Dorsolateral prefrontal cortex (tissue), 120 donors: ENCODE measurements at regions of chr17 and their contacts with region 1.

Region 1: GRCh38 chr17:68777243-68777855 is 176.2 kb upstream of the FAM20A start:
- DNase-seq: peak in 4 of 10 donors; percentile 33 to 67 (median 56)
- H3K4me3 ChIP-seq: peak overlapping the region in 31 of 59 donors; percentile 5 to 53 (median 22)
- H3K27ac ChIP-seq: peak overlapping the region; percentile 52 to 98 (median 90)
- H3K27me3 ChIP-seq: no peaks in the 10 kb centered on the region
- CTCF ChIP-seq: peak; percentile 62 to 97 (median 88)

Region 2: DNA sequence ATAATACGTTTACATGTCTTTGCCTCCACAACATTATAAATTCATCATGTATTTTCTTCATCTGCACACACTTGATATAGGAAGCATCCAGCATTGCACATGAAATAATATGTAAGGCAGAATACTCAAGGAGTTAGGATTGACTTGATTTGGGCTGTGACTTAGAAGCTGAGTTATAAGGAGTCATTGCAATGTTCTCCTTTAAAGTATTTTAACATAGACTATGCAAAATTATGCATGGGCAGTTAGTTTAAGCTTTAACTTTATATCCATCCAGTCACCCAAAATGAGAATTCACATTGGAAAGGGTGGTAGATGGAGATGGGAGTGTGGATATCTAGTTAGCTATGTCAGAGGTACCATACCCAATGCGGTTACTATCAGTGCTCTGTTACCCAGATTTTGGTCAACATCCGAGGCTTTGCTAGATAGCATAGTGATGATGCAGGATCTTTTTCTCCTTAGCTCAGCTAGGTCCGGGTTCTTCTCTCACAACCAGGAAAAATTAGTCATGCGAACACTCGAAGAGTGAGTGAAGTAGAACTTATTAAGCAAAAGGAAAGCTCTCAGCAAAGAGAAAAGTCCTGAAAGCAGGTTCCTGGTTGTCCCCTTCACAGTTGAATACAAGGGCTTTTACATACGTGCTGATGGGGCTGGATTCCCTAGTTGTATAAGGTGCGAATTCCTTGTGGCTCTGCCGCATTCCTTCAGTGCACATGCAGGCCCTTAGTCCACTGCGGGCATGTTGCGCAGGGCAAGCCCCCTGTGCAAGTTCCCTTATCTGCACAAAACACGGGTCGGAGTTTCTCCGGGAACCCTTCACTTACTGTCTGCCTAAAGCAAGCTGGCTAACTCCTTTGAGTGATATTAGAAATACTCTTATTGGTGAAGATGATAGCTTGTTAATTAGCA is 103.1 kb before region 1 on chr17:
- intact Hi-C with region 1: no loop called
- DNase-seq: no peak
- H3K4me3 ChIP-seq: no peak overlapping the region
- H3K27ac ChIP-seq: no peak overlapping the region
- H3K27me3 ChIP-seq: peaks cover 0 to 10% (median 0%) of the 10 kb centered on the region in 45 donors
- CTCF ChIP-seq: no peak

Region 3: GRCh38 chr17:68794636-68795434 is 17.5 kb after region 1 on chr17:
- intact Hi-C with region 1: loop called (anchors 2 kb)
- DNase-seq: peak in 9 of 10 donors; percentile 42 to 86 (median 73)
- H3K4me3 ChIP-seq: peak overlapping the region in 49 of 59 donors; percentile 0 to 54 (median 27)
- H3K27ac ChIP-seq: peak overlapping the region; percentile 70 to 100 (median 98)
- H3K27me3 ChIP-seq: peaks cover 0 to 5% (median 0%) of the 10 kb centered on the region in 45 donors
- CTCF ChIP-seq: peak; percentile 53 to 84 (median 70)

Region 4: GRCh38 chr17:68954863-68955841 is 177.8 kb after region 1 on chr17 and contains the start of gene ABCA8:
- intact Hi-C with region 1: loop called in 1 of 2 experiments (anchors 5 kb)
- DNase-seq: peak in 5 of 10 donors; percentile 43 to 73 (median 47)
- H3K4me3 ChIP-seq: peak within 1 kb of the TSS; percentile 4 to 75 (median 52)
- H3K27ac ChIP-seq: peak within 1 kb of the TSS; percentile 3 to 97 (median 84)
- H3K27me3 ChIP-seq: no peaks in the 10 kb centered on the region
- CTCF ChIP-seq: peak in 6 of 56 donors; percentile 3 to 33 (median 27)
- total RNA-seq, gene ABCA8: 12.2 to 285 (median 71.5) TPM

Region 5: GRCh38 chr17:69235338-69235930 is 458.1 kb after region 1 on chr17:
- intact Hi-C with region 1: loop called (anchors 1 to 2 kb)
- DNase-seq: peak; percentile 32 to 84 (median 72)
- H3K4me3 ChIP-seq: no peak overlapping the region
- H3K27ac ChIP-seq: peak overlapping the region in 20 of 59 donors; percentile 2 to 70 (median 27)
- H3K27me3 ChIP-seq: no peaks in the 10 kb centered on the region
- CTCF ChIP-seq: peak; percentile 75 to 98 (median 88)